Sigmoid colon (tissue), 7 donors: ENCODE measurements at regions of chr12 and their contacts with region 1.

Region 1: DNA sequence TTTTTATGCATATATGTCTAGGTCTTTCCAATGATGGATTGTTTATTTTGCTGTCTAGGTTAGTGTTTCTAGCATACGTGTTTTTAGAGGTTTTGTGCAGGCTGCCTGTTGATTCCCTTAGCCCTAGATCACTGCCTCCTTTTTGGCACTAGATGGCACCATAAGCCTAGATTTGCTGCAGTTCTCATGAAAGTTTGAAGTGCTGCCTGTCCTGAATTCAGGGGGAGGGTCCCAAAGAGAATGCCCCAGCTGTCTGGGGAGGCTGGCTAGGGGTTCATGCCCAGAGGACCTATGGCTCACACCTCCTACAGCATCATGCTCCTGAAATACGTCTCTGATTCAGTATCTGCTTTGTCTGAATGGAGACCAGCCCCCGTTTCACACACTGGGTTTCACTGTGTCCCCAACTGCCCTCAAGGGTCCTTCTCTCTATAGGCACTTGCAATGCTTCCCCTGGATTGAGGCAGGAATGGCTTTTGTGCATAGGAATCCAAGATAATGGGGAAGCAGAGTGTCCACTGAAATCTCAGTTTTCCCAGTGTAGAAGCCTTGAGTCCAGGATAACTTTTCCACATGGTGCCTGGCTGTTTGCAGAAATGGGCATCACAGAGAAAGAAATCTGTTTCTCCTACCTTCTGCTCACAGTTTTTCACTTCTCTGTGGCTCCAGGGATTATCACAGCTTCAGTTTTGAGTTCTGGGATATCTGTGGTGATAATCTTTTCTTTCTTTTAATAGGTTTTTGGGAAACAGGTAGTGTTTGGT is 14.2 kb upstream of the TXNRD1 start:
- DNase-seq: no peak
- H3K4me3 ChIP-seq: no peak overlapping the region
- H3K27ac ChIP-seq: no peak overlapping the region
- H3K4me1 ChIP-seq: peaks cover 0 to 7% (median 2%) of the 10 kb centered on the region in 4 donors
- H3K27me3 ChIP-seq: no peaks in the 10 kb centered on the region
- CTCF ChIP-seq: peak; percentile 50 to 85 (median 76)
- EP300 ChIP-seq: no peak
- POLR2A ChIP-seq: no peak

Region 2: DNA sequence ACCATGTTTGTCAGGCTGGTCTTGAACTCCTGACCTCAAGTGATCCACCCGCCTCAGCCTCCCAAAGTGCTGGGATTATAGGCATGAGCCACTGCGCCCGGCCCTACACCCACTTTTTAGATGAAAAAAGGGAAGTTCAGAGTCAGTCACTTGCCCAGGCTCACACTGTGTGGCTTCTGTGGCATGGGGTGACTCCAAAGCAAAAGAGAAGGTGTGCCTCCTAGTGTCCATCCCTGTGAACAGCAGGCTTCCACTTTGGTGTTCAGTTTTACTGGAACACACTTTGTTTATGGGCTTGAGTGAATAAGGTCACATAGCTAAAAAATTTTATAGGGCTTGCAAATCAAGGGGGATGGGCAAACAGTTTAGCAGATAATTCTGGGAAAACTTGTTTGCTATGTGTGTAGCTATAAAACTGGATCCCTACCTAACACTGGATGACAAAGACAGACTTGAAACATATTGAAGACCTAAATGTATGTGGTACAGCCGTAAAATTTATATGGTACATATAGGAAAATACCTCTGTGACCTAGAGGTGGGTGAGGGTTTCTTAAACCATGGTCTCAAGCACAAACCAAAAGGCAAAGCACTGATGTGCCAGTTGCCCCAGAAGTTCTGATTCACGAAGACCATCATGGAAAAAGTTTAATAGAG is 157.1 kb after region 1 on chr12:
- intact Hi-C with region 1: loop called (anchors 5 kb)
- DNase-seq: peak; percentile 78
- H3K4me3 ChIP-seq: no peak overlapping the region
- H3K27ac ChIP-seq: no peak overlapping the region
- H3K4me1 ChIP-seq: peaks cover 0 to 10% (median 2%) of the 10 kb centered on the region in 4 donors
- H3K27me3 ChIP-seq: no peaks in the 10 kb centered on the region
- CTCF ChIP-seq: peak; percentile 70 to 87 (median 80)
- EP300 ChIP-seq: no peak
- POLR2A ChIP-seq: no peak

Region 3: GRCh38 chr12:104877123-104877705 is 675.8 kb after region 1 on chr12:
- intact Hi-C with region 1: loop called (anchors 5 kb)
- DNase-seq: no peak
- H3K4me3 ChIP-seq: no peak overlapping the region
- H3K27ac ChIP-seq: no peak overlapping the region
- H3K4me1 ChIP-seq: peaks cover 0 to 12% (median 7%) of the 10 kb centered on the region in 4 donors
- H3K27me3 ChIP-seq: no peaks in the 10 kb centered on the region
- CTCF ChIP-seq: peak; percentile 50 to 68 (median 62)
- EP300 ChIP-seq: no peak
- POLR2A ChIP-seq: no peak

Region 4: DNA sequence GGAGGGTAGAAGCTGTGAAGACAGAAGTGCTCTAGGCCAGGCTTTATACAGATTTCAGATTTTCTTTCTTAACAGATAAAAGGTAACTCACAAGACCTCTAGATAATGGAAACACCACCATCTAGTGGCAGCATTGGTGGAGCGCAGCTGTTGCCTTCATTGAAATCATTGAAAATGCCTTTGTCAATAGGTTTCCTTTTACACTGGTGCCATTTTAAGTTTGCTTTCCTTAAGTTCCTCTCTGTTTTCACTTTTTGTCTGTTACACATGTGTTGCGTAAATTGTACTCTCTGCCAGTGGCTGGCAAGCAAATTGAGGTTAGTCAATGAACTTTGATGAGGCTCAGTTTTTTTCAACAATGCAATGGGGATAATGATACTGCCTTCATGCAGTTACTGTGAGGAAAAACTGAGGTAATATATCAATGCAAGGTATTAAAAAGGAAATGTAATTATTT is 851.7 kb after region 1 on chr12:
- intact Hi-C with region 1: loop called (anchors 10 kb)
- DNase-seq: peak; percentile 84
- H3K4me3 ChIP-seq: no peak overlapping the region
- H3K27ac ChIP-seq: no peak overlapping the region
- H3K4me1 ChIP-seq: peaks cover 0 to 6% (median 0%) of the 10 kb centered on the region in 4 donors
- H3K27me3 ChIP-seq: no peaks in the 10 kb centered on the region
- CTCF ChIP-seq: peak; percentile 73 to 91 (median 80)
- EP300 ChIP-seq: no peak
- POLR2A ChIP-seq: no peak